ENCODE measurements at regions of chr2 and their contacts with region 1.

Region 1: DNA sequence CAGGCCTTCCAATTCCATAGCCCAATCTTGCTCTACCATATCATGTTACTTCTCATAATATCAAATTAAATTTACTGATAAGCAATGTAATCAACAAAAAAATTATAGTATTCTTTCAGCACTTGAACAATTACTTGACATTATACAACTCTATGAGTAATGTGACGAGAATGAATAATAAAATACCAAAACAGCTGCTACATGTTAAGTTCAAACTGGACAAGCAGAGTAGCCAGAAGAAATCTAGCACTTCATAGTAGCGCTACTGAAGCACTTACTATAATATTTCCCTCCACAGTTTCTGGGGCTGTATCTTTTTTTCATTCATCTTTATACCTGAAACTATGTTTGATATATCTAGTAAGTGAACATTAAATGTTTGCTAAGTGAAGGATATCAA is 14.9 kb downstream of the PPP3R1 start:
- DNase-seq: no peak
- H3K4me3 ChIP-seq: no peak overlapping the region
- H3K27ac ChIP-seq: peak overlapping the region in 1 of 2 experiments; percentile 22; a peak in 1 of 4 replicates
- H3K4me1 ChIP-seq: peaks cover 25 to 38% of the 10 kb centered on the region in 2 experiments; a peak in 3 of 4 replicates
- H3K27me3 ChIP-seq: no peaks in the 10 kb centered on the region
- CTCF ChIP-seq: no peak
- EP300 ChIP-seq: no peak
- RAD21 ChIP-seq: no peak

Region 2: DNA sequence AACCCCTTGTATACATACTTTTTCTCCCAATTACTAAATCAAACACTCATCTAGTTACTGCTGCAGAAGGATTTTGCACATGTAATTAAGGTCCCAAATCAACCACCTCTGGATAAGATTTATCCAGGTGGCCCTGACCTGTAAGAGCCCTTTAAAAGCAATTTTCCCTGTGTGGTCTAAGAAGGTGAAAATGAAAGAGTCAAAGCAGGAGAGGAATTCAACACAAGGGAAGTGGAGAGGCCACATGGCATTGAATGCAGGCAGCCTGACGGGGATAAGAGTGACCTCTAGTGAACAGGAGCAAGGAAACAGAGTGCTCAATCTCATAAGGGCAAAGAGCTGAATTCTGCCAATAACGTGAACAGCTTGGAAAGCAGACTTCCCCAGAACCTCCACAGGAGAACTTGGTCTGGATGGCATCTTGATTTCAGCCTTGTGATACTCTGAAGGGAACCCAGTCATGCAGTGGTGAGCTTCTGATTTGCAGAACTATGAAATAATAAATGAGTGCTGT is 12.2 kb before region 1 on chr2:
- CTCF ChIA-PET with region 1: interaction called, 10 read pairs
- POLR2A ChIA-PET with region 1: no interaction called
- DNase-seq: peak; percentile 24
- H3K4me3 ChIP-seq: no peak overlapping the region
- H3K27ac ChIP-seq: peak overlapping the region in 1 of 2 experiments; percentile 23; a peak in 1 of 4 replicates
- H3K4me1 ChIP-seq: peaks cover 19 to 24% of the 10 kb centered on the region in 2 experiments; a peak in 3 of 4 replicates
- H3K27me3 ChIP-seq: no peaks in the 10 kb centered on the region
- CTCF ChIP-seq: peak; percentile 35
- EP300 ChIP-seq: no peak
- RAD21 ChIP-seq: peak; percentile 72

Measured in SK-N-SH (cell line).